GM10248 (cell line): ENCODE measurements at regions of chr15 and their contacts with region 1.

Region 1: GRCh38 chr15:88890495-88890894 is 4.8 kb downstream of the HAPLN3 start:
- DNase-seq: no peak
- CTCF ChIP-seq: no peak

Region 2: GRCh38 chr15:88878720-88879184 is 11.7 kb before region 1 on chr15:
- CTCF ChIA-PET with region 1: interaction called, 12 read pairs
- POLR2A ChIA-PET with region 1: no interaction called
- DNase-seq: peak; percentile 77
- CTCF ChIP-seq: peak; percentile 61